IMR-90 (cell line): ENCODE measurements at regions of chr3 and their contacts with region 1.

Region 1: DNA sequence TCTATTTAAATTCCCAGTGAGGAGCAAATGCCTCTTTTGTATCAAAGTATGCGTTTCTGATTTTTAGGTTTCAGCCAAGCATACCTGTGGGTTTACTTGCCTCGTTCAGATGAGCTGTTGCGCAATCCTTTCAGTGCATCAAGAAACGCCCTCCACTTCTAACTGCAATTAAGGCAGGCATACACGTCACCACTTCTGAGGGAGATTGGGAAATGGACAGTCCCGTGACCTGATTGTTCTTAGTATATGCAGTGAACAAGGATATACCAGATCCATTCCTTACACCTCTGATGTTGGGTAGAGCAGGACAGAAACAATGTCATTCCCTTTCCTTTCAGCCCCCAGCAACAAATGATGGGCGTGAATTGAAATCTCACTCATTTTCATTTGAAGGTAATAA is 219.0 kb downstream of the ITPR1 start:
- DNase-seq: peak; percentile 57
- ATAC-seq: no peak
- H3K4me3 ChIP-seq: no peak overlapping the region
- H3K27ac ChIP-seq: no peak overlapping the region
- H3K4me1 ChIP-seq: peaks cover 5% of the 10 kb centered on the region; the same call in 1 of the 2 replicates
- H3K27me3 ChIP-seq: no peaks in the 10 kb centered on the region
- CTCF ChIP-seq: no peak
- POLR2A ChIP-seq: no peak
- RAD21 ChIP-seq: no peak

Region 2: GRCh38 chr3:4656059-4656458 is 56.1 kb before region 1 on chr3:
- CTCF ChIA-PET with region 1: interaction called, 8 read pairs
- POLR2A ChIA-PET with region 1: no interaction called
- dilution Hi-C with region 1: no loop called
- in situ Hi-C with region 1: no loop called
- intact Hi-C with region 1: loop called (anchors 1 kb)
- DNase-seq: peak; percentile 75
- ATAC-seq: peak; percentile 98
- H3K4me3 ChIP-seq: no peak overlapping the region
- H3K27ac ChIP-seq: no peak overlapping the region
- H3K4me1 ChIP-seq: no peaks in the 10 kb centered on the region; the same call in 1 of the 2 replicates
- H3K27me3 ChIP-seq: no peaks in the 10 kb centered on the region
- CTCF ChIP-seq: peak; percentile 97
- POLR2A ChIP-seq: 0 out of 2 replicates have a peak, but pooled peaks have one; percentile 35
- RAD21 ChIP-seq: peak; percentile 99

Region 3: DNA sequence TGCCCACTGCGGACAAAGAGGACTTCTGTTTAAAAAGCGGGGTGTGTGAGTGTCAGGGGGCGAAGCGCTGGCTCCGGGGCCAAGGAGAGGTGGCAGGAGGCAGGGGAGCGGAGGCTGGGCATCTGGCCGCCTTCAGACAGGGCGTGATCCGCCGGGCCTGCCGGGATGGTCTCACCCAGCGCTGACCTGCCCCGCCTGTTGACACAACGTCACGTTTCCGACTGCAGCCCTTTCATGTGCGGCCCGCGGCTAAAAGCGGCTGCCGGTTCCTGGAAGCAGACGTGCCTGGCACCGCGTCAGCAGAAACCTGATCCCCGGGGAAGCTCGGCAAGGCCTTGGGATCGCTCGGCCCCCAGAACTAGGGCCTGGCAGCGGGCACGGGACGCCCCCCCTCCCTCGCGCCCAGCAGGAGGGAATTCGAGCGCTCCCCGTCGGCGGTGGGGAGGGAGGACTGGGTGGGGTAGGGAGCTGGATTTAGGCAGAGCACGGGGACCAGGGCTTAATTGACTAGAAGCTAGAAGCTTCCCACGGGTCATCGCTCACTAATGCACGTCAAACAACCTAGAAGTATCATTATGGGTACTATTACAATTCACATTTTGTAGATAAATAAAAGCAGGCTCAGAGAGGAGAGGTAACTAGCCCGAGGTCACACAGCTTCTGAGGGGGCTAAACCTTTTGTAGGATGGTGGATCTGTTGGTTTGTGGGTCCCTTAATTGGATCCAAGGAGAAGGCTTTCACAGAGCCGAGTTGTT is 274.8 kb after region 1 on chr3:
- CTCF ChIA-PET with region 1: interaction called, 15 read pairs
- POLR2A ChIA-PET with region 1: interaction called, 3 read pairs
- dilution Hi-C with region 1: no loop called
- in situ Hi-C with region 1: loop called (anchors 5 kb)
- intact Hi-C with region 1: no loop called
- DNase-seq: peak; percentile 98
- ATAC-seq: peak; percentile 82
- H3K4me3 ChIP-seq: peak overlapping the region; percentile 25
- H3K27ac ChIP-seq: peak overlapping the region; percentile 82
- H3K4me1 ChIP-seq: peaks cover 44% of the 10 kb centered on the region
- H3K27me3 ChIP-seq: no peaks in the 10 kb centered on the region
- CTCF ChIP-seq: 0 out of 2 replicates have a peak, but pooled peaks have one; percentile 15
- POLR2A ChIP-seq: no peak; the same call in 1 of the 2 replicates
- RAD21 ChIP-seq: peak; percentile 2; the same call in 1 of the 2 replicates

Region 4: DNA sequence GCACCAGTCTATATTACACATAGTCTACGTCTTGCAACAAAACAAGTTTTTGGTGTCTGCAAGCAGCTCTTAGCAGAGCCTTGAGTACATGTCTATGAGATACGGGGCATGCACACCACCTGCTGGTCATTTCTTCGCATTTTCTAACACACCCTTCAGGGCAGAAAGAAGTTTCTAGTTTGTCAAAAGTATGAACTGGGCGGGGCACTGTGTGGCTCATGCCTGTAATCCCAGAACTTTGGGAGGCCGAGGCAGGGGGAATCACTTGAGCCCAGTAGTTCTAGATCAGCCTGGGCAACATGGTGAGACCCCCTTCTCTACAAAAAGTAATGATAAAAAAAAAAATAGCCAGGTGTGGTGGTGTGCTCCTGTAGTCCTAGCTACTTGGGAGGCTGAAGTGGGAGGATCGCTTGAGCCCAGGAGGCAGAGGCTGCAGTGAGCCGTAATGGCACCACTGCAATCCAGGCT is 345.7 kb after region 1 on chr3:
- CTCF ChIA-PET with region 1: interaction called, 9 read pairs
- POLR2A ChIA-PET with region 1: interaction called, 10 read pairs
- dilution Hi-C with region 1: no loop called
- in situ Hi-C with region 1: loop called (anchors 5 kb)
- intact Hi-C with region 1: loop called (anchors 1 kb)
- DNase-seq: peak; percentile 85
- ATAC-seq: peak; percentile 83
- H3K4me3 ChIP-seq: no peak overlapping the region
- H3K27ac ChIP-seq: no peak overlapping the region
- H3K4me1 ChIP-seq: peaks cover 6% of the 10 kb centered on the region
- H3K27me3 ChIP-seq: peaks cover 3% of the 10 kb centered on the region; the same call in 1 of the 2 replicates
- CTCF ChIP-seq: peak; percentile 80
- POLR2A ChIP-seq: no peak
- RAD21 ChIP-seq: peak; percentile 90

Region 5: DNA sequence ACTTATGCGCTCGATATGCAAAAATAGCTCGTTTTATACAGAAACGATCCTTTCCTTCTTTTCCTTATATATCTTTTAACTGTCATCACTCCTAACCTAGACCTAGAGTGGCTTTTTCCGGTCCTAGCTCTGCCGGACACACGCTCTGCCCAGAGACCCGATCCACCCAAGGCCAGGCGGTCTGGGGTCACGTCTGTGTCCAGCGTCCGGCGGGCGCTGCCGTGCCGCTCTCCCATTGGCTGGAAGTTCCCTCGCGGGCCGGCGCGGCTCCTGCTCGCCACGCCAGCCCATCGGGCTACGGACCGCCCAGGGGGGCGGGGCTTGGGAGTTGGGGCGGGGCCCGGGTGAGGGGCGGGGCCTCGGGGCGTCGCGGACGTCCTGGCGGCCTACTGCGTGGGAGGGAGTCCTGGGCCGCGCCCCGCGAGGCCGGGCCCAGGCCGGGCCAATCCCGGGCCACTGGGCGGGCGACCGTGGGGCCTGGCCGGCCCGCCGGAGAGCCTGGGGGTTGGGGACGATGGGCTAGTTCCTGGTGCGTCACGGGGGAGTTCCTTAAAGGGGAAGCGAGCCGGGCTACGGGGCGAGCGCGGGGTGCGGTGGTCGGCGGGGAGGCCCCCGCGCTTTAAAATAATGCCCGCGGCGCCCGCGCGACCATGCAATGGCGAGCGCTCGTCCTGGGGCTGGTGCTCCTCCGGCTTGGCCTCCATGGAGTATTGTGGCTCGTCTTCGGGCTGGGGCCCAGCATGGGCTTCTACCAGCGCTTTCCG is 475.2 kb after region 1 on chr3 and contains the start of gene EDEM1:
- CTCF ChIA-PET with region 1: interaction called, 3 read pairs
- POLR2A ChIA-PET with region 1: no interaction called
- dilution Hi-C with region 1: no loop called
- in situ Hi-C with region 1: no loop called
- intact Hi-C with region 1: loop called (anchors 5 kb)
- DNase-seq: peak; percentile 94
- ATAC-seq: peak; percentile 95
- H3K4me3 ChIP-seq: peak within 1 kb of the TSS; percentile 94
- H3K27ac ChIP-seq: peak within 1 kb of the TSS; percentile 88
- H3K4me1 ChIP-seq: peaks cover 2% of the 10 kb centered on the region
- H3K27me3 ChIP-seq: no peaks in the 10 kb centered on the region
- CTCF ChIP-seq: no peak
- POLR2A ChIP-seq: peak; percentile 86
- RAD21 ChIP-seq: no peak
- total RNA-seq, gene EDEM1: 20.8 and 23.5 TPM in 2 replicates